GM12878 (cell line): ENCODE measurements at regions of chr11 and their contacts with region 1.

Region 1: GRCh38 chr11:103682318-103683184 is 353.9 kb upstream of the DDI1 start:
- DNase-seq: peak; percentile 26
- ATAC-seq: peak; percentile 96
- H3K4me3 ChIP-seq: no peak overlapping the region
- H3K27ac ChIP-seq: no peak overlapping the region
- H3K4me1 ChIP-seq: no peaks in the 10 kb centered on the region
- H3K27me3 ChIP-seq: peaks cover 0 to 2% of the 10 kb centered on the region in 2 experiments; a peak in 1 of 4 replicates
- CTCF ChIP-seq: peak; percentile 68 to 88 (median 81)
- EP300 ChIP-seq: no peak
- POLR2A ChIP-seq: no peak
- RAD21 ChIP-seq: peak; percentile 90

Region 2: DNA sequence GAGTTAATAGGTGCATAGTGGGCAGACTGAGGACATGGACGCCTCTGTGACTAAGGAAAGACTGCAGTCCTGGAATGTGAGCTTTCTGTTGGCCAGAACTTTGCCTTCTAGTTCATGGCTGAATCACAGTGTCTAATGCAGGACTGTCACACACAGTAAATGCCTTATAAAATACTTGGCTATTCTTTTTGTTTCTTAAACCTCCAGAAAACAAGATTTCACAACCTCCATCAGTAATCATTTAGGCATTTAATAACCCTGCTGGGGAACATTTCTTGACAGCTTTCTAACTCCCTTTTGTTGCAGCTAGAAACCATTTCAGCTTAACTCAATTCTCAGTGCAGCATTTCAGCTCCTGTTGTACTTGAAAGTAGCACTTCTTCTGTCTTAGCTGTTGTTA is 18.1 kb after region 1 on chr11:
- CTCF ChIA-PET with region 1: interaction called, 22 read pairs
- POLR2A ChIA-PET with region 1: no interaction called
- RAD21 ChIA-PET with region 1: interaction called, 4 read pairs
- SMC1A ChIA-PET with region 1: interaction called, 5 read pairs
- in situ Hi-C with region 1: no loop called
- intact Hi-C with region 1: no loop called
- DNase-seq: no peak
- ATAC-seq: no peak
- H3K4me3 ChIP-seq: no peak overlapping the region
- H3K27ac ChIP-seq: no peak overlapping the region
- H3K4me1 ChIP-seq: no peaks in the 10 kb centered on the region
- H3K27me3 ChIP-seq: no peaks in the 10 kb centered on the region
- CTCF ChIP-seq: no peak
- EP300 ChIP-seq: no peak
- POLR2A ChIP-seq: no peak
- RAD21 ChIP-seq: no peak

Region 3: DNA sequence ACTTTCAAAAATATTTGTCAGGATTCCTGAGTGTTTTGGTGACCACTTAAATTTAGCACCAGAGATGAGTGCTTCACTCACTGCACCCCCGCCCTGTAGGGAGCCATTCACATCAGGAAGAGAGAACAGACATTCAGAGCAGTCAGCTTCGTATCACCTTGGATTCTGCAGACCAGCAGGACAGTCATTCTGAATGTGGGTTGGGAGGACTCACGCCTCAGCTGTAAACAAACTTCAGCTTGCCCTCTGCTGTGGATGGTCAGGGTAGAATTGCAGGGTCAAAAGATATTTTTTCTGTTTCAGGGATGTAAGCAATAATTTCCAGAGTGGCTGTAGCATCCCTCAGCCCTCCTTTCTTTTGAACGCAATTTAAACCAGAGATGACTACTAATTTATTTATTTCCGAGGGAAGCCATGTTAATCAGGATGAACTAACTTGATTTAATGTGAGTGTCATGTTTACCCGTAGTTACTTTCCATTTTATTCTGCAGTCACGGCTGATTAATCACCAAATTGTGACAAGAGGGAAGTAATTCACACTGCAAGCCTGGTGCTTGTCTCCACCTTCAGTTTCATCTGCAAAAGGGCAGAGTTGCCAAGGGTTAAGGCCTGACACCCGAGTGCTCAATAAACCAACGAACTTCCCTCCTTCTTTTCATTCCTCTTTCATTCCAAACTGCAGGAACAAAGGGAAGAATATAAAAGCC is 179.7 kb after region 1 on chr11:
- CTCF ChIA-PET with region 1: interaction called, 11 read pairs
- POLR2A ChIA-PET with region 1: no interaction called
- RAD21 ChIA-PET with region 1: interaction called, 5 read pairs
- SMC1A ChIA-PET with region 1: interaction called, 4 read pairs
- in situ Hi-C with region 1: no loop called
- intact Hi-C with region 1: loop called (anchors 2 kb)
- DNase-seq: no peak
- ATAC-seq: peak; percentile 64
- H3K4me3 ChIP-seq: no peak overlapping the region
- H3K27ac ChIP-seq: no peak overlapping the region
- H3K4me1 ChIP-seq: peaks cover 6% of the 10 kb centered on the region; the same call in 1 of the 2 replicates
- H3K27me3 ChIP-seq: no peaks in the 10 kb centered on the region
- CTCF ChIP-seq: peak; percentile 6 to 26 (median 16); a peak in 3 of 6 replicates
- EP300 ChIP-seq: no peak
- POLR2A ChIP-seq: no peak
- RAD21 ChIP-seq: peak; percentile 33

Region 4: GRCh38 chr11:103920449-103920848 is 237.9 kb after region 1 on chr11:
- CTCF ChIA-PET with region 1: interaction called, 16 read pairs
- POLR2A ChIA-PET with region 1: no interaction called
- RAD21 ChIA-PET with region 1: no interaction called
- SMC1A ChIA-PET with region 1: interaction called, 10 read pairs
- in situ Hi-C with region 1: no loop called
- intact Hi-C with region 1: no loop called
- DNase-seq: no peak
- ATAC-seq: peak; percentile 41
- H3K4me3 ChIP-seq: no peak overlapping the region
- H3K27ac ChIP-seq: no peak overlapping the region
- H3K4me1 ChIP-seq: no peaks in the 10 kb centered on the region; the same call in none of the 2 replicates
- H3K27me3 ChIP-seq: no peaks in the 10 kb centered on the region
- CTCF ChIP-seq: no peak
- EP300 ChIP-seq: no peak
- POLR2A ChIP-seq: no peak
- RAD21 ChIP-seq: no peak

Region 5: GRCh38 chr11:104151404-104152204 is 469.1 kb after region 1 on chr11:
- CTCF ChIA-PET with region 1: interaction called, 10 read pairs
- POLR2A ChIA-PET with region 1: no interaction called
- RAD21 ChIA-PET with region 1: interaction called, 8 read pairs
- SMC1A ChIA-PET with region 1: interaction called, 11 read pairs
- in situ Hi-C with region 1: loop called (anchors 5 kb)
- intact Hi-C with region 1: loop called (anchors 1 kb)
- DNase-seq: no peak
- ATAC-seq: no peak
- H3K4me3 ChIP-seq: no peak overlapping the region
- H3K27ac ChIP-seq: no peak overlapping the region
- H3K4me1 ChIP-seq: no peaks in the 10 kb centered on the region
- H3K27me3 ChIP-seq: no peaks in the 10 kb centered on the region
- CTCF ChIP-seq: peak; percentile 16 to 45 (median 30); a peak in 3 of 6 replicates
- EP300 ChIP-seq: no peak
- POLR2A ChIP-seq: no peak
- RAD21 ChIP-seq: peak; percentile 52; the same call in 1 of the 2 replicates

Region 6: DNA sequence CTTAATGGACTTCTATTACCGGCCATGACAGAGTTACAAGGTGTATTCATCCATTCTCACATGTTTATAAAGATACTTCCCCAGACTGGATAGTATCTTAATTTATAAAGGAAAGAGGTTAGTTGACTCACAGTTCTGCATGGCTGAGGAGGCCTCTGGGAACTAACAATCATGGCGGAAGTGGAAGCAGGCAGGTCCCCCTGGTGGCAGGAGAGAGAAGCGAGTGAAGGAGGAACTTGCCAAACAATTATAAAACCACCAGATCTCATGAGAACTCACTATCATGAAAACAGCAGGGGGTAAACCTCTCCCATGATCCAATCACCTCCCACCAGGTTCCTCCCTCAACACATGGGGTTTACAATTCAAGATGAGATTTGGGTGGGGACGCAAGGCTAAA is 651.4 kb after region 1 on chr11:
- CTCF ChIA-PET with region 1: interaction called, 8 read pairs
- POLR2A ChIA-PET with region 1: no interaction called
- RAD21 ChIA-PET with region 1: interaction called, 4 read pairs
- SMC1A ChIA-PET with region 1: interaction called, 3 read pairs
- in situ Hi-C with region 1: no loop called
- intact Hi-C with region 1: loop called (anchors 2 kb)
- DNase-seq: no peak
- ATAC-seq: peak; percentile 65
- H3K4me3 ChIP-seq: no peak overlapping the region
- H3K27ac ChIP-seq: no peak overlapping the region
- H3K4me1 ChIP-seq: no peaks in the 10 kb centered on the region
- H3K27me3 ChIP-seq: no peaks in the 10 kb centered on the region
- CTCF ChIP-seq: peak; percentile 27 to 47 (median 44)
- EP300 ChIP-seq: no peak
- POLR2A ChIP-seq: no peak
- RAD21 ChIP-seq: peak; percentile 22; the same call in 1 of the 2 replicates